Heart right ventricle (tissue), 16 donors: ENCODE measurements at regions of chr12 and their contacts with region 1.

Region 1: DNA sequence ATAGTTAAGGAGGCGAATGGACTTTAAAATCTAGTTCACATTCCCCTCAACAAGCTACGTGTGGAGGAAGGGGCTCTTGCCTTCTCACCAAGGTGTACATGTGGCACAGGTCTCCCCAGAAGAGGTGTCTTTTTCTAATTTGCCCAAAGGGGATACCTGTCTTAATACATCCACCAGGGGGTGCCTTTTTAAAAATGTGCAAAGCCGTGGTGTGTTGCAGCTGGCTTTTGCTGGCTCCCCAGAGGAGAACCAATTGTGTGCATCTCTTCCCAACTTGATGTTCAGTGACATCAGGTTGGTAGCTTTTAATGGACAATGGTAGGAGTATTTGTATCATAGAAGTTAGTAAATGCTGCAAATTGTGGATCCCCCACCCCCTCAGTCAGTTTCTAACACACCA is 33.8 kb downstream of the CREBL2 start:
- DNase-seq: peak in 1 of 2 donors; percentile 6
- ATAC-seq: no peak
- H3K4me3 ChIP-seq: no peak overlapping the region
- H3K27ac ChIP-seq: no peak overlapping the region
- H3K4me1 ChIP-seq: no peaks in the 10 kb centered on the region
- H3K27me3 ChIP-seq: no peaks in the 10 kb centered on the region
- CTCF ChIP-seq: peak in 7 of 9 donors; percentile 34 to 55 (median 43)

Region 2: DNA sequence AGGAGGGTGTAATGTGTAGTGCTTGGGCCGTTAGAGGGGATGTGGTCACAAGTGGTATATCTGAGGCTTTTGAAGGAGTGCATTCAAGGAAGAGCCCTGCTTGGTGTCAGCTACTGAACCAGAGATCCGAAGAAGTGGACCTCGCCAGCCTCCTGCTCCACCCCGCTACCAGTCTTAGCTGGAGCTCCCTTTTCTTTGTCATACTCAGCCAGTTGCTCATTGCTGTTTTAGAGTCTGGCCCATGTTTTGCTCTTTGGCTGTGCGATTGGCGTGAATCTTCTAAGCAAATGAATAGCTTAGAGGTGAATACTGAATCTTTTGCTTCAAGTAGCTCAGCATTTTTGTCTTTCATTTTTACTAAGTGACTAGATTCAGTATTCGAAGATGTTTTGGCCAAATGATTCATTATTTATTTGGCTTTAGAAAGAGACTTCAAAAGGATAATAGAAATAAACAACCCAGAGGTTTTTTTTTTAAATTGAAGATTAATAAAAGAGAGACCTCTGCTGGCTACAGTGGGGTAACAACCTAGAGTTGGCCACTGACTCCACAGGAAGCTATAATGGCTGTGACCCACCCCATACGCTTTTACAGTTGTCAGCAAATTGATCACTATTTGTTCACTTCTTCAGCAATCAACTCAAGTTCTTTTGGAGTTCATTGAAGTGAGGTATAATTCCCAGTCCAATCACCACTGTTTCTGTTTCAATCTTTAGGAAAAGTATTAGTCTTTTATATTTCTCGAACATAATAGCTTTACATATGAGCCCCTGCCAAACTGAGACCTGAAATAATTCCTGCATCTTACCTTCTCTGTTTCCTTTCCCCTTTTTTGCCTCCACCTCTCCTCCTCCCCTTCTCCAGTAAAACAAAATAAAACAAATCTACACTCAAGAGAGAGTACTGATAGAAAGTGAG is 91.5 kb after region 1 on chr12:
- intact Hi-C with region 1: loop called in 1 of 10 experiments (anchors 1 kb)
- DNase-seq: peak in 1 of 2 donors; percentile 29
- ATAC-seq: peak; percentile 67 to 83 (median 79)
- H3K4me3 ChIP-seq: peak overlapping the region in 3 of 10 donors; percentile 2 to 24 (median 15)
- H3K27ac ChIP-seq: peak overlapping the region in 4 of 10 donors; percentile 24 to 80 (median 60)
- H3K4me1 ChIP-seq: peaks cover 0 to 36% (median 24%) of the 10 kb centered on the region in 9 donors
- H3K27me3 ChIP-seq: no peaks in the 10 kb centered on the region
- CTCF ChIP-seq: peak; percentile 38 to 81 (median 67)

Region 3: DNA sequence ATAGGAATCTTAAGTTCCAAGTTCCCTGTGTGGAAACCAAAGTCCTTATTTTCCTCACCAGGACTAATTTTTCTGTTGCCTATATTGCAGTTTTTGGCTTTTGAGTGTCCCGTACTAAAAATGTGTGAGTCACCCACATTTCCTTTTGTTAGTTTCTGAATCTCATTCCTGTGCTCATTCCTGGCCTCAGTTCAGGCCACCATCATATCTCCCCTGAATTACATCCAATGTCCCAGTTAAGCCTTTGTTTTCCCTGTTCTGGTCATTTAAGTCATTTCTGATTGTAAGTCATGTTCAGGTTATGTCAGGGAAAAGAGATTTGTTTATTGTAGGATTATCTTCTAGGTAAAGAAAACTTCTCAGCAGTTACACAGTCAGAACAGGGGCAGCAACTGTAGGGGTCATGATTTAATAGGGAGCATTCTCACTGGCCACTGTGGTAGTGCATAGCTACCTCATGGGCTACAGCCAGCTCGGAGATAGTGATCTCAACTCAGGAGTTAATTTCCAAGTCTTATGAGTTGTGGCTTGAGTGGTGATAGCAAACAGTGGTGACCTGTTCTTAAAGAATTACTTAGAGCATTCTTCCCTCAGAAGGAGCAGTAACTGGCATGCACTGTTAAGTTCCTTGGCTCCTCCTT is 174.3 kb after region 1 on chr12:
- intact Hi-C with region 1: no loop called
- DNase-seq: no peak
- ATAC-seq: peak in 4 of 8 donors; percentile 35 to 62 (median 53)
- H3K4me3 ChIP-seq: no peak overlapping the region
- H3K27ac ChIP-seq: peak overlapping the region in 3 of 10 donors; percentile 25 to 37 (median 32)
- H3K4me1 ChIP-seq: peaks cover 0 to 58% (median 34%) of the 10 kb centered on the region in 9 donors
- H3K27me3 ChIP-seq: no peaks in the 10 kb centered on the region
- CTCF ChIP-seq: no peak

Region 4: GRCh38 chr12:13196130-13196921 is 550.8 kb after region 1 on chr12 and contains the start of gene EMP1:
- intact Hi-C with region 1: no loop called
- DNase-seq: peak; percentile 79 to 96
- ATAC-seq: peak; percentile 83 to 93 (median 87)
- H3K4me3 ChIP-seq: peak within 1 kb of the TSS; percentile 53 to 71 (median 65)
- H3K27ac ChIP-seq: peak within 1 kb of the TSS; percentile 87 to 97 (median 92)
- H3K4me1 ChIP-seq: peaks cover 7 to 82% (median 41%) of the 10 kb centered on the region in 9 donors
- H3K27me3 ChIP-seq: no peaks in the 10 kb centered on the region
- CTCF ChIP-seq: no peak
- total RNA-seq, gene EMP1: 74.6 to 403 (median 98.5) TPM